ENCODE measurements at regions of chr14 and their contacts with region 1.

Region 1: GRCh38 chr14:24093901-24094761 is at the start of gene PCK2:
- DNase-seq: peak; percentile 84
- H3K4me3 ChIP-seq: peak within 1 kb of the TSS; percentile 82
- H3K27me3 ChIP-seq: no peaks in the 10 kb centered on the region
- CTCF ChIP-seq: peak; percentile 21; the same call in 1 of the 2 replicates
- polyA plus RNA-seq, gene PCK2: 141 and 227 TPM in 2 replicates

Region 2: DNA sequence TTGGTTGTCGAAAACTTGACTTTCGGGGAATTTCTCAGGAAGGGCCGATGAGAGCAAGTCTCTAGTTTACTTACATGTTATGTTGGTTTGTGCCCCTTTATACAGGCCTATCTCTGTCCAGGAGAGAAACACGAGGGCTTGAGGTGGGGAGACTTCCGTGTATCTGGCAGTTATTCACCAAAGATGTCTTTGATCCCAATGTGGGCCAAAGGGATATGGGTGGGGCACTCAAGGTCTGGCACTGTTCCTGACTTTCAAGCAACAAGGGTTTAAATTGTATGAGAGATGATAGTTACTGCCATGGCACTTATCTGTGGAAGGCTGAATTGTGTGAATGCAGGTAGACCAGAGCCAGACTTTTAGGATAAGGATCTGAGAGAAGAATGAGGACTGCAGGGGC is 277.8 kb before region 1 on chr14:
- CTCF ChIA-PET with region 1: no interaction called
- POLR2A ChIA-PET with region 1: no interaction called
- DNase-seq: no peak
- H3K4me3 ChIP-seq: no peak overlapping the region
- H3K27me3 ChIP-seq: no peaks in the 10 kb centered on the region
- CTCF ChIP-seq: no peak

Region 3: DNA sequence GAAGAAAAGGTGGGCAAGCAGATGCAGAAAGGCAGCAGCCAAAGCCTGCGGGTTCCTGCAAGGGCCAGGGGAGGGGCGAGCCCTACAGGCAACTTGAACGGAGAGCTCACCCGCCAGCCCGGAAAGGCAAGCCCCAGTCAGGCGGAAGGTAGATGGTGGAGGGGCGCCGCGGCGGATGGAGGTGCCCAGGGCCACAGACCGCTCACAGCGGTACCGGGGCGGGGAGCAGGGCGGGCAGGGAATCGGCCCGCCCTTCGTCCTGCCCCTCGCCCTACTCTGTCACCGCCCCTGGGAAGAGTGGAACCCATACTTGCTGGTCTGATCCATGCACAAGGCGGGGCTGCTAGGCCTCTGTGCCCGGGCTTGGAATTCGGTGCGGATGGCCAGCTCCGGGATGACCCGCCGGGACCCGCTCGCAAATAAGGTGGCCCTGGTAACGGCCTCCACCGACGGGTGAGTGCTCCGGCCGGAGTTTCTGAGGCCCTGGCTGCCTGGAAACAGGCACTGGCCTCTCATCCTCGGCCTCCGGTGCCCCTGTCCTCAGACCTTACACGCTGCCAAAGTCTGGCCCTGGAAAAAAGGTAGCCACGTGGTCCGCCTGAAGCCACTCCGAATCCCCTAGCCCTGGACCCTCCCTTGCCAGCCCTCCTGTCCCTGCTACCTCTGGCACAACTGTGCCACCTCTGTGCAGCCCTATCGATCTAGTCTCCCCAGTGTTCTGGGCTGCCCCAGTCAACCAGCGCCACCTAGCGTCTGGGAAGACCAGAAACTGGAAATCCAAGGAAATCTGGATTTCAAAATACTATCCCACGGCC is 140.5 kb before region 1 on chr14 and contains the start of gene DHRS4:
- CTCF ChIA-PET with region 1: no interaction called
- POLR2A ChIA-PET with region 1: interaction called, 10 read pairs
- DNase-seq: peak; percentile 29
- H3K4me3 ChIP-seq: peak within 1 kb of the TSS; percentile 79
- H3K27me3 ChIP-seq: no peaks in the 10 kb centered on the region
- CTCF ChIP-seq: peak; percentile 93
- polyA plus RNA-seq, gene DHRS4: 24.3 and 24.7 TPM in 2 replicates

Region 4: GRCh38 chr14:24080888-24081738 is 13.0 kb before region 1 on chr14:
- CTCF ChIA-PET with region 1: interaction called, 74 read pairs
- POLR2A ChIA-PET with region 1: no interaction called
- DNase-seq: no peak
- H3K4me3 ChIP-seq: peak overlapping the region; percentile 45
- H3K27me3 ChIP-seq: peaks cover 27% of the 10 kb centered on the region
- CTCF ChIP-seq: no peak